Activated B cell treated with CpG ODN at 0.5 μM for 24 hours (primary cell): ENCODE measurements at regions of chr9 and their contacts with region 1.

Region 1: DNA sequence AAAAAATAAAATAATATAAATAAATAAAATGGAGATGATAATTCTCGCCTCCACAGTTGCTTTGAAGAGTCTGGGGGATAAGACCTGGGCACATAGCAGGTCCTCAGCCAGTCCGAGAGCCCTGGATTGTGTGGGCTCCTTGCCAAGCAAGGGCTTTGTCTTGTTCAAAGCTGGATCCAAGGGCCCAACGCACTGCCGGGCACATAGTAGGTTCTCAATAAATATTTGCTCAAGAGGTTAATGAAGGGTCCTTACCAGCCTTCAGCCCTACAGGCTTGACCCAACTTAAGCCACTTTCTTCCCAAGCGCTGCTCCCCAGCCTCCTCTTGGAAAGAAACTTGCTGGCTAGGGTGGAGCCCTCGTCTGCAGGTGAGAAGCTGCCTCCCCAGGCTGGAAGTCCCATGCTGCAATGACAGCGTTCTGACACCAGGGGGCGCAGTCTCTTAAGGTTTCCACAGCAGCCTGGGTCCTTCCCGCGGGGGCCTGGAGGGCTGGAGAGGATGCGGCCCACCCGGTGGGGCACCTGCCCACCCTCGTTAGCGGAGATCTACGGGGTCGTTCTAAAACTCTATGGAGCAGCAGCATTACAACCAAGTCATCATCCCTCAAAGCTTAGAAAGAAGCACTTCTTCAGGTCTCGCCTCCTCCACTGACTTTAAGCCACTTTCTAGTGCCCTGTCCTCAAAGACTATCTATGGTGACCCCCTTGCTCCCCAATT is 115.2 kb downstream of the LHX2 start:
- DNase-seq: peak; percentile 78
- ATAC-seq: peak; percentile 80
- H3K4me3 Mint-ChIP-seq: no peak overlapping the region
- H3K27ac Mint-ChIP-seq: no peak overlapping the region
- H3K4me1 Mint-ChIP-seq: peaks cover 24% of the 10 kb centered on the region
- H3K27me3 Mint-ChIP-seq: no peaks in the 10 kb centered on the region
- CTCF ChIP-seq: peak; percentile 75

Region 2: GRCh38 chr9:124137009-124137943 is 10.5 kb after region 1 on chr9:
- CTCF ChIA-PET with region 1: interaction called, 12 read pairs
- POLR2A ChIA-PET with region 1: interaction called, 3 read pairs
- intact Hi-C with region 1: no loop called
- DNase-seq: no peak
- ATAC-seq: peak; percentile 83
- H3K4me3 Mint-ChIP-seq: peak overlapping the region; percentile 67
- H3K27ac Mint-ChIP-seq: peak overlapping the region; percentile 80
- H3K4me1 Mint-ChIP-seq: peaks cover 28% of the 10 kb centered on the region
- H3K27me3 Mint-ChIP-seq: no peaks in the 10 kb centered on the region
- CTCF ChIP-seq: no peak

Region 3: DNA sequence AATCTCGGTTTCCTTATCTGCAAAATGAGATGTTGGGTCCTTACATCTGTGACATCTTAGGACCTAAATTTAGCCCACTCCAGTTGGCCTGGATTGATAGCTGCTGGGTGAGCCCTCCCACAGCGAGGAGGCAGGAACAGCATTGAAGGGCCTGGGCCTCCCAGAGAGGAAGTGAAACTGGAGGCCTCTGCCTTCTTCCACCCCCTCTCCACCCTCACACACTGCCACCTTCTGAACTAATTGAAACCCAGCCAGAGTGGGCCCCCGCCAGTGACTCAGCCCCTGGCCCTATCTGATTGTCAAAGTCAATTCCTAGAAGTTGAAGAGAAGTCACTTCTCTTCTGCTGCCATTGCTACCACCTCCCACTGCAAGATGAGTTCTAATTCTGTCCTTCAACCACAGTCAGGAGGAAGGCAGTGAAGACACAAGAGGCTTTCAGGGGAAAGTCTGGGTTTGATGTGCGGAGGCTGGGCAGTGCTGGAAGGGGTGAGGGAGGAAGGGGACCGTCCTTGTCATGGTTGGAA is 75.8 kb after region 1 on chr9:
- CTCF ChIA-PET with region 1: interaction called, 25 read pairs
- POLR2A ChIA-PET with region 1: interaction called, 13 read pairs
- intact Hi-C with region 1: loop called (anchors 1 kb)
- DNase-seq: peak; percentile 75
- ATAC-seq: peak; percentile 88
- H3K4me3 Mint-ChIP-seq: peak overlapping the region; percentile 80
- H3K27ac Mint-ChIP-seq: peak overlapping the region; percentile 99
- H3K4me1 Mint-ChIP-seq: peaks cover 96% of the 10 kb centered on the region
- H3K27me3 Mint-ChIP-seq: no peaks in the 10 kb centered on the region
- CTCF ChIP-seq: no peak

Region 4: GRCh38 chr9:124267271-124267807 is 140.6 kb after region 1 on chr9:
- CTCF ChIA-PET with region 1: interaction called, 6 read pairs
- POLR2A ChIA-PET with region 1: interaction called, 5 read pairs
- intact Hi-C with region 1: loop called (anchors 1 kb)
- DNase-seq: peak; percentile 43
- ATAC-seq: peak; percentile 49
- H3K4me3 Mint-ChIP-seq: peak overlapping the region; percentile 66
- H3K27ac Mint-ChIP-seq: peak overlapping the region; percentile 88
- H3K4me1 Mint-ChIP-seq: peaks cover 95% of the 10 kb centered on the region
- H3K27me3 Mint-ChIP-seq: no peaks in the 10 kb centered on the region
- CTCF ChIP-seq: no peak

Region 5: DNA sequence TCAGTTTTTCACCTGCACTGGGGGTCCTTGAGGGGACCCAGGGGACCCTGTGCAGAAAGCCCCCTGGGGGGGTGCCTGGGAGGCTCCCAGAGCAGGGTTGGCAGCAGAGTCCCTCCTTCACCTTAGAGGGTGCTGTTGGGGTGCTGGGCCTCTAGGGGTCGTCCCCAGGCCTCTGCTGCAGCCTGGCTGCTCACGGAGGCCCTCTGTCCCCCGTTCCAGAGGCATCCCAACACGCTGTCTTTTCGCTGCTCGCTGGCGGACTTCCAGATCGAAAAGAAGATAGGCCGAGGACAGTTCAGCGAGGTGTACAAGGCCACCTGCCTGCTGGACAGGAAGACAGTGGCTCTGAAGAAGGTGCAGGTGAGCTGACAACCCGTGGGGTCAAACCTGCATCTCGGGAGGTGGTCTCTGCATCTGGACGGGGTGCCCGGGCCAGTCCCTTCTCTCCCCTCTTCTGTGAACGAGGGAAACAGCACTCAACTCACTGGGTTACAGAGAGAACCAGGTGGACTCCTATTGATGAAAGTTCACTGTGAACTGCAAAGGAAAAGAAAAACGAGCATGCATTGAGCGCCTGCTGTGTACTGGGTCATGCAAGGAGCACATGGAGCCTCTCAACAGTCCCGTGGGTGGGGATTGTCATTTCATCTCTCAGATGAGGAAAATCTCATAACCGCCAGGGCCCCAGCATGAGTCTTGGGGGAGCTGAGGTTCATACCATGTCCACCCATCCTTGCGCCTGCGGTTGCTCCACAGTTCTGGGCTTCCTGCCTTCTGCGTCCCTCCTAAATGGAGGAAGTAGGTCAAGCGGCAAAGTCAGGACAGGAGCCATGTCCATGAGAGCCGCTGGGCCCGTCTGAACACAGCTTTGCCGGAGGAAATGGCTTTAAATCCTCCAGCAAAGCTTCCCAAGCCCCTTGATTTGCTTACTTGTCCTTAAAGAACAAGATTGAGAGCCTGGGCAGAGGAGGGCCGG is 185.8 kb after region 1 on chr9:
- CTCF ChIA-PET with region 1: interaction called, 14 read pairs
- POLR2A ChIA-PET with region 1: no interaction called
- intact Hi-C with region 1: no loop called
- DNase-seq: no peak
- ATAC-seq: no peak
- H3K4me3 Mint-ChIP-seq: no peak overlapping the region
- H3K27ac Mint-ChIP-seq: no peak overlapping the region
- H3K4me1 Mint-ChIP-seq: peaks cover 9% of the 10 kb centered on the region
- H3K27me3 Mint-ChIP-seq: no peaks in the 10 kb centered on the region
- CTCF ChIP-seq: no peak

Region 6: DNA sequence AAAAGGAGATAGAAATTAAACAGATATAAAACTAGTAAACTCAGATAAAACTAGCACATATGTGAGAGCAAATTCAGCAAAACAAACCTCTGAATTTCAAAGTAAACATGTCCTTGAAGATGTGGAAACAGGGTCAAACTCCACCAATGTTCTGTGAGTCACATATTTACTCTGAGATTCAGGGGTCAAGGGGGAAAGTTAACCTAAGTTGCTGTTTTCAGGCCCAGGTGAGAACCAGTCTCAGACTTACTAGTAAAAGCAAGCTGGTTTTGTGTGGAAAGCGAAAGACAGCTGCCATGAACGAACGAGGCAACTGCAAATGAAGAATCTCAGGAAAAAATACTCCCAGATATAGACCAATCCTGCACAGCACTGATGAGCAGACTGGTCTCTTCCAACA is 259.5 kb after region 1 on chr9:
- CTCF ChIA-PET with region 1: interaction called, 15 read pairs
- POLR2A ChIA-PET with region 1: no interaction called
- intact Hi-C with region 1: loop called (anchors 2 kb)
- DNase-seq: no peak
- ATAC-seq: no peak
- H3K4me3 Mint-ChIP-seq: no peak overlapping the region
- H3K27ac Mint-ChIP-seq: no peak overlapping the region
- H3K4me1 Mint-ChIP-seq: peaks cover 21% of the 10 kb centered on the region
- H3K27me3 Mint-ChIP-seq: no peaks in the 10 kb centered on the region
- CTCF ChIP-seq: no peak

Region 7: GRCh38 chr9:124537926-124538325 is 411.2 kb after region 1 on chr9:
- CTCF ChIA-PET with region 1: interaction called, 8 read pairs
- POLR2A ChIA-PET with region 1: no interaction called
- intact Hi-C with region 1: loop called (anchors 1 kb)
- DNase-seq: no peak
- ATAC-seq: no peak
- H3K4me3 Mint-ChIP-seq: no peak overlapping the region
- H3K27ac Mint-ChIP-seq: no peak overlapping the region
- H3K4me1 Mint-ChIP-seq: no peaks in the 10 kb centered on the region
- H3K27me3 Mint-ChIP-seq: no peaks in the 10 kb centered on the region
- CTCF ChIP-seq: no peak